Naive thymus-derived CD4-positive, alpha-beta T cell (primary cell): ENCODE measurements at regions of chr11 and their contacts with region 1.

Region 1: GRCh38 chr11:5624489-5625279 is at the start of gene TRIM34:
- DNase-seq: peak; percentile 15 to 79 (median 74)
- ATAC-seq: peak; percentile 98
- H3K4me3 ChIP-seq: peak within 1 kb of the TSS; percentile 73
- H3K4me3 Mint-ChIP-seq: peak within 1 kb of the TSS; percentile 81 to 96 (median 91)
- H3K27ac ChIP-seq: peak within 1 kb of the TSS; percentile 84
- H3K27ac Mint-ChIP-seq: peak within 1 kb of the TSS; percentile 90 to 96 (median 95)
- H3K4me1 ChIP-seq: peaks cover 17 to 18% of the 10 kb centered on the region in 2 donors
- H3K4me1 Mint-ChIP-seq: peaks cover 33 to 55% (median 51%) of the 10 kb centered on the region in 7 donors
- H3K27me3 ChIP-seq: no peaks in the 10 kb centered on the region
- H3K27me3 Mint-ChIP-seq: no peaks in the 10 kb centered on the region
- total RNA-seq, gene TRIM34: 5.8 to 14.2 (median 10.8) TPM

Region 2: DNA sequence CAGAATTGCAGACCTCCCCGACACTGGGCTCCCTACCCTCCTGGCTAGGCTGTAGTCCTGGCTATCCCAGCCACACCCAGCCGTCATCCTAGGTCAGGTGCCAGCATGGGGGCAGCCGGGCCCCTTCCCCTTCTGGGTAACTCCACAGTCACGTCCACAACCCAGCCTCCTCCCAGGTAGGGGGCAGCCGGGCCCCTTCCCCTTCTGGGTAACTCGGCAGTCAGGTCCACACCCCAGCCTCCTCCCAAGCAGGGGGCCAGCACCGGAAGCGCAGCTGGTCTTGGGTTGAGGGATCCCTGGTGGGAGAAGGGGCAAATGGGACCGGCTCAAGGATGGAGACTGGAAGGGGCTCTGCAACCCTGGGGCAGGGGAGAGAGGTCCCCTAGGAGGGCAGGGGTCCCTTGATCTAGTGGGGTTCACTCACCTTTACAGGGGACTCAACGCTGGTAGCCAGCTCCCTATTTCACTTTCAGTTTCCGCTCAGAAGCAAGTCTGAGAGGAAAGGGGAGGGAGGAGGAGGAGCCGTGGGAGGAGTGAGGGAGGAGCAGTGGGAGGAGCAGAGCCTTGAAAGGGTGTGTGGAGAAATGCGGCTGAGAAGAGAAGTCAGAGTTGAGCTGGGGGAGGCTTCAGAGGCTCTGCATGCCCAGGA is 1231.4 kb before region 1 on chr11 and contains the start of gene TRIM21:
- CTCF ChIA-PET with region 1: no interaction called
- POLR2A ChIA-PET with region 1: no interaction called
- intact Hi-C with region 1: loop called in 1 of 2 experiments (anchors 10 kb)
- DNase-seq: peak; percentile 62 to 92 (median 87)
- ATAC-seq: peak; percentile 100
- H3K4me3 ChIP-seq: peak within 1 kb of the TSS; percentile 87
- H3K4me3 Mint-ChIP-seq: peak within 1 kb of the TSS; percentile 88 to 94 (median 90)
- H3K27ac ChIP-seq: peak within 1 kb of the TSS; percentile 89
- H3K27ac Mint-ChIP-seq: peak within 1 kb of the TSS; percentile 68 to 96 (median 93)
- H3K4me1 ChIP-seq: peaks cover 8 to 14% of the 10 kb centered on the region in 2 donors
- H3K4me1 Mint-ChIP-seq: peaks cover 47 to 61% (median 58%) of the 10 kb centered on the region in 7 donors
- H3K27me3 ChIP-seq: no peaks in the 10 kb centered on the region
- H3K27me3 Mint-ChIP-seq: peaks cover 0 to 8% (median 5%) of the 10 kb centered on the region in 5 donors
- total RNA-seq, gene TRIM21: 17.5 to 78.9 (median 29.7) TPM

Region 3: DNA sequence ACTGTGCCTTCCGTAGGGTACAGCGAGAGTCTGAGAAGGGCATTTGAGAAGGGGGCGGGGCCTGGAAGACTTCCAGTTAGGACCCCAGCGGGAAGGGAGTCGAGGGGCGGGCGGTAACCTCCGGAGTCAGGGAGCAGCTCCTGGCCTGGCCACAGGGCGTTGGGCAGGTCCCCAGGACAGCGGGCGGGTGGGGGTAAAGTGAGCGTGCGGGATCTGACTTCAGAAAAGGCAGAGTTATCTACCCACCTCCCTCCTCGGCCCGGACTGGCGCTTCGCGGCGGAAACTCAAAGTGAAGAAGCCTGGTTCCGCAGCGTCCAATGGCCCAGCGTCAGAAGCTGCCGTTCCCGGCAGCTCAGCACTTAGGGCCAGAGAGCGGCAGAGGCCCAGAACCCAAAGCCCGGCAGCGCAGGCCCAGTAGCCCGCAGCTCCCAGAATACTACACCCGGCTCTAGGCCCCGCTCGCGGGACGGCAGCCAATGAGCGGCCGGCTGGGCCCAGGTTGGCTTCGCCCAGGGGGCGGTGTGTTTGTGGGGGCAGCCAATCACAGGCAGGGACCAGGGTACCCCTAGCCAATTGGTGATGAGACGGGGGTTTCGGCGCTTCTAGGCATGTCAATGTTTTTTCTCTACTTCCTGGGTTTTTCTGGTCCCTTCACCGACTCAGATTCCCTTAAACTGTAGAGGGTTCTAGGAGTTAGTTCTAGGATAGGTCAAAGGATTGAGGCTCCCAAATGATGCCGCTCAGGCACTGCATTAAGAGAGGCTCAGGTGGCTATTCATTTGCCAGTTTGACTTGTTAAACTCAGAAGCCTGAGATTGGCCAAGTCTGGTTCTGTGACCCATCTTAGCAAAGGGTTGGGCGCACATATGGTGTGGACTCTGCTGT is 1016.7 kb before region 1 on chr11 and contains the start of gene TRIM68:
- CTCF ChIA-PET with region 1: no interaction called
- POLR2A ChIA-PET with region 1: no interaction called
- intact Hi-C with region 1: loop called in 1 of 2 experiments (anchors 10 kb)
- DNase-seq: peak; percentile 87 to 96 (median 94)
- ATAC-seq: peak; percentile 100
- H3K4me3 ChIP-seq: peak within 1 kb of the TSS; percentile 80
- H3K4me3 Mint-ChIP-seq: peak within 1 kb of the TSS; percentile 80 to 97 (median 91)
- H3K27ac ChIP-seq: peak within 1 kb of the TSS; percentile 88
- H3K27ac Mint-ChIP-seq: peak within 1 kb of the TSS; percentile 85 to 96 (median 94)
- H3K4me1 ChIP-seq: peaks cover 15 to 22% of the 10 kb centered on the region in 2 donors
- H3K4me1 Mint-ChIP-seq: peaks cover 29 to 68% (median 56%) of the 10 kb centered on the region in 7 donors
- H3K27me3 ChIP-seq: no peaks in the 10 kb centered on the region
- H3K27me3 Mint-ChIP-seq: peaks cover 0 to 2% (median 0%) of the 10 kb centered on the region in 5 donors
- total RNA-seq, gene TRIM68: 3.8 to 29.5 (median 12.4) TPM

Region 4: GRCh38 chr11:5514841-5515240 is 109.8 kb before region 1 on chr11:
- CTCF ChIA-PET with region 1: no interaction called
- POLR2A ChIA-PET with region 1: no interaction called
- intact Hi-C with region 1: no loop called
- DNase-seq: no peak
- ATAC-seq: no peak
- H3K4me3 ChIP-seq: no peak overlapping the region
- H3K4me3 Mint-ChIP-seq: no peak overlapping the region
- H3K27ac ChIP-seq: no peak overlapping the region
- H3K27ac Mint-ChIP-seq: no peak overlapping the region
- H3K4me1 ChIP-seq: no peaks in the 10 kb centered on the region
- H3K4me1 Mint-ChIP-seq: no peaks in the 10 kb centered on the region
- H3K27me3 ChIP-seq: no peaks in the 10 kb centered on the region
- H3K27me3 Mint-ChIP-seq: peaks cover 0 to 16% (median 0%) of the 10 kb centered on the region in 5 donors

Region 5: GRCh38 chr11:5600374-5600851 is 24.3 kb before region 1 on chr11:
- CTCF ChIA-PET with region 1: no interaction called
- POLR2A ChIA-PET with region 1: no interaction called
- intact Hi-C with region 1: loop called in 1 of 2 experiments (anchors 1 kb)
- DNase-seq: peak; percentile 17 to 61 (median 49)
- ATAC-seq: peak; percentile 91
- H3K4me3 ChIP-seq: no peak overlapping the region
- H3K4me3 Mint-ChIP-seq: no peak overlapping the region
- H3K27ac ChIP-seq: no peak overlapping the region
- H3K27ac Mint-ChIP-seq: no peak overlapping the region
- H3K4me1 ChIP-seq: no peaks in the 10 kb centered on the region
- H3K4me1 Mint-ChIP-seq: peaks cover 4 to 15% (median 9%) of the 10 kb centered on the region in 7 donors
- H3K27me3 ChIP-seq: no peaks in the 10 kb centered on the region
- H3K27me3 Mint-ChIP-seq: peaks cover 0 to 20% (median 17%) of the 10 kb centered on the region in 5 donors

Region 6: GRCh38 chr11:5690216-5690615 is 65.5 kb after region 1 on chr11:
- CTCF ChIA-PET with region 1: no interaction called
- POLR2A ChIA-PET with region 1: interaction called, 3 read pairs
- intact Hi-C with region 1: loop called (anchors 1 kb)
- DNase-seq: no peak
- ATAC-seq: no peak
- H3K4me3 ChIP-seq: peak overlapping the region; percentile 81
- H3K4me3 Mint-ChIP-seq: peak overlapping the region; percentile 93 to 100 (median 98)
- H3K27ac ChIP-seq: peak overlapping the region; percentile 93
- H3K27ac Mint-ChIP-seq: peak overlapping the region; percentile 95 to 100 (median 97)
- H3K4me1 ChIP-seq: peaks cover 29 to 40% of the 10 kb centered on the region in 2 donors
- H3K4me1 Mint-ChIP-seq: peaks cover 38 to 68% (median 57%) of the 10 kb centered on the region in 7 donors
- H3K27me3 ChIP-seq: no peaks in the 10 kb centered on the region
- H3K27me3 Mint-ChIP-seq: no peaks in the 10 kb centered on the region

Region 7: DNA sequence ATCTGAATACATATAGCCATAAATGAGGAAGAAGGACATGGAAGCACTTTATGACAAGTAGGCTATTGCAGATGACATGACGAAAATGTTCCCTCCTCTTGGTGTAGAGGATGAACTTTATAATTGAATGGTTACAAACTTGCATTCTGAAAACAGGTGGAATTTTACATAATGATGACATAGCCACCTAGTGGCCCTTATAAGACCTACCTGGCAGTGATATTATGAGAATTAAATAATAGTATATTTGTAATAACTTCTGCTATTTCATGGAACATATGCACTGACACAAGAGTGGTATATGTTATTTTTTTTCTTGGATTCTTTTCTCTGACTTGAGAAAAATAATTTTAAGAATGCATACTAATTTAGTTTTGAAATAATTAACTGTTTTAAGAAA is 87.8 kb after region 1 on chr11:
- CTCF ChIA-PET with region 1: no interaction called
- POLR2A ChIA-PET with region 1: no interaction called
- intact Hi-C with region 1: loop called in 1 of 2 experiments (anchors 5 kb)
- DNase-seq: peak in 3 of 9 donors; percentile 8 to 33 (median 22)
- ATAC-seq: peak; percentile 42
- H3K4me3 ChIP-seq: no peak overlapping the region
- H3K4me3 Mint-ChIP-seq: no peak overlapping the region
- H3K27ac ChIP-seq: no peak overlapping the region
- H3K27ac Mint-ChIP-seq: peak overlapping the region in 7 of 9 donors; percentile 6 to 83 (median 19)
- H3K4me1 ChIP-seq: no peaks in the 10 kb centered on the region
- H3K4me1 Mint-ChIP-seq: peaks cover 0 to 13% (median 4%) of the 10 kb centered on the region in 7 donors
- H3K27me3 ChIP-seq: no peaks in the 10 kb centered on the region
- H3K27me3 Mint-ChIP-seq: no peaks in the 10 kb centered on the region

Region 8: DNA sequence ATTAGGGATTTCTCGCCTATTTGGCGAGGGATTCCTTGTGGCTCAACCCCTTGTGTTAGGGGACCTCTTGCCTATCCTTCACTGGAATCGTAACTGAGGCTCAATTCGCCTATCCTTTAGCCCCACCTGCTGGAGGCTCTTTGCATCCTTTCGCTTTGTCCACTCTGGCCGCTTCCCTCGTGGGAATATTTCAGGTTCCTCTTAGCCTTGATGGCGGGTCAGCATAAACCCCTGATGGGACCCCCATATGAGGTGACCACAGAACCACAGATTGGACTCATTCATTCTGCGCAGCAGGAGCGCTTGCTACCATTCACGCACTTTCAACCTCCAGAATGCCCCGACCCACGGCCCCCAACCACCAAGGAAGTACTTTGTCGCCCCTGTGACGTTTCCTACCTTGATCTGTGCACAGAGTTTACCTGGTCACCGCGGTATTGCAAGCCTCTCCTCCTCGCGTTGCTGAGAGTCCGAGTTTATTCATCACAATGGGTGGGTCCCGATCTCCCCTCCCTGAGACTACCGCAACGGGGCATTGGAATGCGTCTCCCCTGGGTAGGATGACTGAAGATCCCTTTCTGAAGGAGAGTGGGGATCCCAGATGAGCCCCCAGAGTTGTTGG is 183.9 kb after region 1 on chr11 and contains the start of gene OR52N2:
- CTCF ChIA-PET with region 1: no interaction called
- POLR2A ChIA-PET with region 1: no interaction called
- intact Hi-C with region 1: loop called in 1 of 2 experiments (anchors 1 kb)
- DNase-seq: peak; percentile 38 to 73 (median 66)
- ATAC-seq: peak; percentile 92
- H3K4me3 ChIP-seq: peak within 1 kb of the TSS; percentile 61
- H3K4me3 Mint-ChIP-seq: peak within 1 kb of the TSS; percentile 86 to 95 (median 90)
- H3K27ac ChIP-seq: no peak within 1 kb of the TSS
- H3K27ac Mint-ChIP-seq: peak within 1 kb of the TSS in 8 of 9 donors; percentile 1 to 87 (median 20)
- H3K4me1 ChIP-seq: no peaks in the 10 kb centered on the region
- H3K4me1 Mint-ChIP-seq: peaks cover 7 to 16% (median 10%) of the 10 kb centered on the region in 7 donors
- H3K27me3 ChIP-seq: peaks cover 0 to 6% of the 10 kb centered on the region in 2 donors
- H3K27me3 Mint-ChIP-seq: peaks cover 12 to 29% (median 25%) of the 10 kb centered on the region in 5 donors
- total RNA-seq, gene OR52N2: not detected